CD4-positive, alpha-beta memory T cell (primary cell): ENCODE measurements at regions of chr17 and their contacts with region 1.

Region 1: DNA sequence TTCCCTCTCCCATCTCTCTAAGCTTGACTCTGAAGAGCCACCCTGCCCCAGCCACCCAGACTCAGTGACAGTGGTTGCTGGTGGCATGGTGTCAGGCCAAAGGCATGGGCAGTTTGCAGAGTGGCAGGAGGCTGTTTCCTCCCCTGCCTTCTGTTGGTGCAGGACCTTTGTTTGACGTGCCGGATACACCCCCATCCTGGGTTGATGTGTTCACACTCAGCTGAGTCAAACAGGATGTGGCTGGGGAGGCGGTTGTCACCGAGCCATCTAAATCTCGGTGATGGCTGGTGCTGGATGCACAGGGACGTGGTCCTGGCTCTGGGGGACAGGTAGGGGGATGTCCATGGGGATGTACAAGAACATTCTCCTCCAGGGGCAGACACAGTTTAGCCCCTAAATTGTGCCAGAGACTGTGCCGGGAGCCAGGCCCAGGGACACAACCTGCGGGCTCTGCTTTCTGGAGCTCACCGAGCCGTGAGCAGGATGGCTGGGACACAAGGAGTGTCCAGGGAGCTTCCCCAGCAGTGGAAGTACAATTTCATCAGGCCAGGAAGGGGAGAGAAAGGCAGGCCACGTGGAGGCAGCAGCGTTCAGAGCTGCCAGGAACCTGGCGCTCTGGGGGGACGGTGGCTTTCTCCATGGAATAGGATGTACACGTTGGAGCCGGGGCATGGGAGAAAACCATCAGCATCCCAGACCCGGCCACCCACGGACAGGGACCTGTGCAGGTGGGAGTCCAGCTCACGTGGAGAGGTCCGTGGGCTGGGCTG is 264.2 kb downstream of the SEC14L1 start:
- DNase-seq: peak; percentile 78 to 92 (median 83)
- H3K4me3 ChIP-seq: peak overlapping the region; percentile 59 to 88
- H3K4me3 Mint-ChIP-seq: peak overlapping the region; percentile 94 to 99 (median 96)
- H3K27ac ChIP-seq: peak overlapping the region; percentile 87
- H3K27ac Mint-ChIP-seq: peak overlapping the region; percentile 96 to 100 (median 98)
- H3K4me1 ChIP-seq: peaks cover 97% of the 10 kb centered on the region
- H3K4me1 Mint-ChIP-seq: peaks cover 59 to 100% (median 81%) of the 10 kb centered on the region in 4 donors
- H3K27me3 ChIP-seq: no peaks in the 10 kb centered on the region
- H3K27me3 Mint-ChIP-seq: no peaks in the 10 kb centered on the region

Region 2: DNA sequence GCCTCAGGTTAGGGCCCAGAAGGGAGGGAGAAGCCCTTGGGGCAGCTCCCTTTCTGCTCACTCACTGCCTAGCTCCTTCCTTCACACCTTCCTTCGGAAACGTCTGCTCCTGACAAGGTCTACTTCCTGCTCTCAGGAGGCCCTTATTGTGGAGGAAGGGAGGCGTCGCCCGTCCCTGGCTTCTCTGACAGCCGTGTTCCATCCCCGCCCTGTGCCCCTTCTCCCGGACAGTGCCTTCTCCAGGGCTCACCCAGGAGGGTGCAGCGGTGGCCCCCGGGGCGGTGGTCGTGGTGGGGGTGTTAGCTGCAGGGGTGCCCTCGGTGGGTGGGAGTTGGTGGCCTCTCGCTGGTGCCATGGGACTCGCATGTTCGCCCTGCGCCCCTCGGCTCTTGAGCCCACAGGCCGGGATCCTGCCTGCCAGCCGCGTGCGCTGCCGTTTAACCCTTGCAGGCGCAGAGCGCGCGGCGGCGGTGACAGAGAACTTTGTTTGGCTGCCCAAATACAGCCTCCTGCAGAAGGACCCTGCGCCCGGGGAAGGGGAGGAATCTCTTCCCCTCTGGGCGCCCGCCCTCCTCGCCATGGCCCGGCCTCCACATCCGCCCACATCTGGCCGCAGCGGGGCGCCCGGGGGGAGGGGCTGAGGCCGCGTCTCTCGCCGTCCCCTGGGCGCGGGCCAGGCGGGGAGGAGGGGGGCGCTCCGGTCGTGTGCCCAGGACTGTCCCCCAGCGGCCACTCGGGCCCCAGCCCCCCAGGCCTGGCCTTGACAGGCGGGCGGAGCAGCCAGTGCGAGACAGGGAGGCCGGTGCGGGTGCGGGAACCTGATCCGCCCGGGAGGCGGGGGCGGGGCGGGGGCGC is 32.3 kb before region 1 on chr17:
- CTCF ChIA-PET with region 1: interaction called, 42 read pairs
- POLR2A ChIA-PET with region 1: interaction called, 6,031 read pairs
- intact Hi-C with region 1: loop called (anchors 5 kb)
- DNase-seq: peak; percentile 61 to 74 (median 68)
- H3K4me3 ChIP-seq: peak overlapping the region; percentile 52 to 95
- H3K4me3 Mint-ChIP-seq: peak overlapping the region; percentile 82 to 100 (median 87)
- H3K27ac ChIP-seq: peak overlapping the region; percentile 68
- H3K27ac Mint-ChIP-seq: peak overlapping the region; percentile 81 to 93 (median 90)
- H3K4me1 ChIP-seq: peaks cover 66% of the 10 kb centered on the region
- H3K4me1 Mint-ChIP-seq: peaks cover 43 to 84% (median 55%) of the 10 kb centered on the region in 4 donors
- H3K27me3 ChIP-seq: no peaks in the 10 kb centered on the region
- H3K27me3 Mint-ChIP-seq: no peaks in the 10 kb centered on the region

Region 3: GRCh38 chr17:77391668-77392375 is 13.2 kb before region 1 on chr17:
- CTCF ChIA-PET with region 1: interaction called, 97 read pairs
- POLR2A ChIA-PET with region 1: interaction called, 6,031 read pairs
- intact Hi-C with region 1: loop called (anchors 1 kb)
- DNase-seq: peak; percentile 39 to 75 (median 48)
- H3K4me3 ChIP-seq: peak overlapping the region in 1 of 2 donors; percentile 11
- H3K4me3 Mint-ChIP-seq: peak overlapping the region; percentile 57 to 84 (median 67)
- H3K27ac ChIP-seq: peak overlapping the region; percentile 50
- H3K27ac Mint-ChIP-seq: peak overlapping the region; percentile 86 to 95 (median 89)
- H3K4me1 ChIP-seq: peaks cover 95% of the 10 kb centered on the region
- H3K4me1 Mint-ChIP-seq: peaks cover 39 to 91% (median 78%) of the 10 kb centered on the region in 4 donors
- H3K27me3 ChIP-seq: no peaks in the 10 kb centered on the region
- H3K27me3 Mint-ChIP-seq: no peaks in the 10 kb centered on the region

Region 4: GRCh38 chr17:77444984-77445759 is 40.2 kb after region 1 on chr17:
- CTCF ChIA-PET with region 1: interaction called, 24 read pairs
- POLR2A ChIA-PET with region 1: interaction called, 6,031 read pairs
- intact Hi-C with region 1: loop called (anchors 1 kb)
- DNase-seq: peak; percentile 92 to 95 (median 94)
- H3K4me3 ChIP-seq: peak overlapping the region; percentile 54 to 64
- H3K4me3 Mint-ChIP-seq: peak overlapping the region; percentile 73 to 89 (median 86)
- H3K27ac ChIP-seq: peak overlapping the region; percentile 90
- H3K27ac Mint-ChIP-seq: peak overlapping the region; percentile 90 to 99 (median 99)
- H3K4me1 ChIP-seq: peaks cover 100% of the 10 kb centered on the region
- H3K4me1 Mint-ChIP-seq: peaks cover 65 to 99% (median 89%) of the 10 kb centered on the region in 4 donors
- H3K27me3 ChIP-seq: no peaks in the 10 kb centered on the region
- H3K27me3 Mint-ChIP-seq: no peaks in the 10 kb centered on the region

Region 5: DNA sequence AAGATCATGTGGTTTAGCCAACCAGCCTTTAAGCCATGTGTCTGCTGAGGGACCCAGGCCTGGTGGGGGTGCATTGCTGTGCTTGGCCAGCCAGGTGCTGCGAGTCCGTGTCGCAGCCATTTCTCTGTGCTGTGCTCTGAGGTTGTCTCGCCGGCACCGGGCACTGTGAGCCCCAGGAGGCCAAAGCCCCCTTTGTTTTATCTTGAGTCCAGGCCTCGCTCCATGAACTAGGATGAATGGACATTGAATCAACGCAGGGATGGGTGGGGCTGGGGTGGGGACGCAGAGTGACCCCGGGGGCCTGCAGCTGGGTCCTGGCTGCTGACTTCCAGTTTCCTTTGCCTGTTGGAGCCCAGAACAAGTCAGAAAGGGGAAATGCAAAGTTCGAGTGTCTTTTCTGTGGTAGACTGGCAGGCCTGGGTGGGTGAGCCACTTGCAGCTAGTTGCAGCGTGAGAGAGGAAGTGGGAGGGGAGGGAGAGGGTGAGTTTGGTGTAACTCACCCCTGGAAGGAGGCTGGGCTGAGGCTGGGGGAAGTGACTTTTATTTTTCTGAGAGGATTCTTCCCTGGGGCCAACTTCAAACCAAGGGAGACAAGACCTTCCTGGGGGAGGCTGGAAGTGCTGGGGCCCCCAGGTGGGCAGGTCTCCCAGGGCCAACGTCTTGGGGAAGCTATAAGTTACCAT is 60.5 kb after region 1 on chr17:
- CTCF ChIA-PET with region 1: interaction called, 13 read pairs
- POLR2A ChIA-PET with region 1: interaction called, 6,031 read pairs
- intact Hi-C with region 1: no loop called
- DNase-seq: peak; percentile 82 to 94 (median 84)
- H3K4me3 ChIP-seq: peak overlapping the region; percentile 6 to 47
- H3K4me3 Mint-ChIP-seq: peak overlapping the region; percentile 80 to 90 (median 84)
- H3K27ac ChIP-seq: peak overlapping the region; percentile 50
- H3K27ac Mint-ChIP-seq: peak overlapping the region; percentile 83 to 97 (median 85)
- H3K4me1 ChIP-seq: peaks cover 99% of the 10 kb centered on the region
- H3K4me1 Mint-ChIP-seq: peaks cover 60 to 95% (median 79%) of the 10 kb centered on the region in 4 donors
- H3K27me3 ChIP-seq: no peaks in the 10 kb centered on the region
- H3K27me3 Mint-ChIP-seq: no peaks in the 10 kb centered on the region

Region 6: GRCh38 chr17:77494664-77495435 is 89.9 kb after region 1 on chr17:
- CTCF ChIA-PET with region 1: interaction called, 44 read pairs
- POLR2A ChIA-PET with region 1: interaction called, 19 read pairs
- intact Hi-C with region 1: loop called (anchors 1 kb)
- DNase-seq: peak; percentile 64 to 78 (median 70)
- H3K4me3 ChIP-seq: no peak overlapping the region
- H3K4me3 Mint-ChIP-seq: peak overlapping the region in 2 of 8 donors; percentile 5 to 35
- H3K27ac ChIP-seq: peak overlapping the region; percentile 10
- H3K27ac Mint-ChIP-seq: peak overlapping the region; percentile 57 to 94 (median 87)
- H3K4me1 ChIP-seq: peaks cover 41% of the 10 kb centered on the region
- H3K4me1 Mint-ChIP-seq: peaks cover 8 to 45% (median 17%) of the 10 kb centered on the region in 4 donors
- H3K27me3 ChIP-seq: no peaks in the 10 kb centered on the region
- H3K27me3 Mint-ChIP-seq: no peaks in the 10 kb centered on the region